OCI-LY7 (cell line): ENCODE measurements at regions of chr9 and their contacts with region 1.

Region 1: DNA sequence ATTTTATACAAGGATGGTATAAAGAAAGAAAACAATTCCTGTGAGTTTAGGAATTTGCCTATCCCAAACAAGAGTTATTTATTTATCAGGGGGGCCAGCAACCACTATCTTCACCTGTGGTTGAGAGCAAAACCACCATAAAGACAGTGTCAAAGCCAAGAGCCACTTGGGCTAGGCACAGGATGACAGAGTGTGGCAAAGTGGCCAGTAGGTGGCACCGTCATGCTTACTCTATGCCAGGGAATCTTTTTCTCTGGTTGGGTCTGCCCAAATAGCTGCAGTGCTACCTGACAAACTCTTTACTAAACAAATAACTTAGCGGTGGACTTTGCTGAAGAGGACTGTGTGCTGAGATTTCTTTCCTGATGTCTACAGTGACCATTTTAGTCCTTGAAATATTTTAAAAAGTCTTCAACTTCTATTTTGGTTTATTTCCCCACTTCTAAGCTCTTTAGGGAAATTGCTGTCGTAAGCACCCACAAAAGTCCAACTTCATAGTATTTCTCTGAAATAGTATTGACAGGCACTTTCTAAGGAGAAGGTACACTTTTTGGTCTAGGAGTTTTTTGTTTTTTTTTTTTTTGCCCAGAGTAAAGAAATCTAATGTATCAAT is 285.0 kb downstream of the RFX3 start:
- DNase-seq: peak; percentile 85
- H3K4me3 ChIP-seq: no peak overlapping the region
- H3K27ac ChIP-seq: no peak overlapping the region
- H3K4me1 ChIP-seq: peaks cover 8% of the 10 kb centered on the region
- CTCF ChIP-seq: peak; percentile 97

Region 2: GRCh38 chr9:3299872-3300271 is 59.1 kb after region 1 on chr9:
- CTCF ChIA-PET with region 1: no interaction called
- POLR2A ChIA-PET with region 1: no interaction called
- intact Hi-C with region 1: loop called (anchors 5 kb)
- DNase-seq: peak; percentile 86
- H3K4me3 ChIP-seq: peak overlapping the region; percentile 48
- H3K27ac ChIP-seq: peak overlapping the region; percentile 62
- H3K4me1 ChIP-seq: peaks cover 27% of the 10 kb centered on the region
- CTCF ChIP-seq: no peak

Region 3: GRCh38 chr9:3441197-3441816 is 200.5 kb after region 1 on chr9:
- CTCF ChIA-PET with region 1: interaction called, 5 read pairs
- POLR2A ChIA-PET with region 1: interaction called, 5 read pairs
- intact Hi-C with region 1: loop called (anchors 1 kb)
- DNase-seq: peak; percentile 74
- H3K4me3 ChIP-seq: no peak overlapping the region
- H3K27ac ChIP-seq: no peak overlapping the region
- H3K4me1 ChIP-seq: peaks cover 4% of the 10 kb centered on the region
- CTCF ChIP-seq: peak; percentile 90

Region 4: GRCh38 chr9:3628239-3628638 is 387.5 kb after region 1 on chr9:
- CTCF ChIA-PET with region 1: no interaction called
- POLR2A ChIA-PET with region 1: no interaction called
- intact Hi-C with region 1: loop called (anchors 10 kb)
- DNase-seq: no peak
- H3K4me3 ChIP-seq: no peak overlapping the region
- H3K27ac ChIP-seq: no peak overlapping the region
- H3K4me1 ChIP-seq: no peaks in the 10 kb centered on the region
- CTCF ChIP-seq: no peak

Region 5: GRCh38 chr9:4011054-4011453 is 770.3 kb after region 1 on chr9:
- CTCF ChIA-PET with region 1: no interaction called
- POLR2A ChIA-PET with region 1: no interaction called
- intact Hi-C with region 1: no loop called
- DNase-seq: no peak
- H3K4me3 ChIP-seq: no peak overlapping the region
- H3K27ac ChIP-seq: no peak overlapping the region
- H3K4me1 ChIP-seq: no peaks in the 10 kb centered on the region
- CTCF ChIP-seq: no peak